PC-9 (cell line): ENCODE measurements at regions of chr7 and their contacts with region 1.

Region 1: DNA sequence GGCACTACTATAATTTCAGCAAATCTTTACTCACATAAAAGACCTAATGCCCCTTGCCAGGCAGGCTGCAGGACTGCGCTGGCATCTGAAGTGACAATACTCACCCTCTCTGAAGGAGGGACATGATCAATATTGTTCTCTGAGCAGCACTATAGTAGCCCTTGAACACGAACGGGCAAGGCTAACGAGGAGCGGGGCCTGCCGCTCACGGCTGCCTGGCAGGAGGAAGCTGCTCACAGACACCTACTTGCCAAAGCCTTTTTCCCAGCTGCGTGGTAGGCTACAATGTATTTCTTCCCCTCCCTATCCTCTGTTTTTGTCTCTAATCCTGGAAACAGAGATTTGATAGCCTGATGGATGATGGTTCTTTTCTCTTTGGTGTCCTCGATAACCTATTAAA is 19.9 kb downstream of the PUS7 start:
- DNase-seq: no peak
- H3K4me3 ChIP-seq: no peak overlapping the region
- H3K27ac ChIP-seq: no peak overlapping the region
- H3K4me1 ChIP-seq: no peaks in the 10 kb centered on the region
- H3K27me3 ChIP-seq: no peaks in the 10 kb centered on the region
- CTCF ChIP-seq: no peak

Region 2: GRCh38 chr7:105892387-105892786 is 390.2 kb after region 1 on chr7:
- CTCF ChIA-PET with region 1: no interaction called
- POLR2A ChIA-PET with region 1: interaction called, 12 read pairs
- intact Hi-C with region 1: no loop called
- DNase-seq: no peak
- H3K4me3 ChIP-seq: no peak overlapping the region
- H3K27ac ChIP-seq: no peak overlapping the region
- H3K4me1 ChIP-seq: no peaks in the 10 kb centered on the region
- H3K27me3 ChIP-seq: no peaks in the 10 kb centered on the region
- CTCF ChIP-seq: no peak